ENCODE measurements at regions of chr19 and their contacts with region 1.

Region 1: DNA sequence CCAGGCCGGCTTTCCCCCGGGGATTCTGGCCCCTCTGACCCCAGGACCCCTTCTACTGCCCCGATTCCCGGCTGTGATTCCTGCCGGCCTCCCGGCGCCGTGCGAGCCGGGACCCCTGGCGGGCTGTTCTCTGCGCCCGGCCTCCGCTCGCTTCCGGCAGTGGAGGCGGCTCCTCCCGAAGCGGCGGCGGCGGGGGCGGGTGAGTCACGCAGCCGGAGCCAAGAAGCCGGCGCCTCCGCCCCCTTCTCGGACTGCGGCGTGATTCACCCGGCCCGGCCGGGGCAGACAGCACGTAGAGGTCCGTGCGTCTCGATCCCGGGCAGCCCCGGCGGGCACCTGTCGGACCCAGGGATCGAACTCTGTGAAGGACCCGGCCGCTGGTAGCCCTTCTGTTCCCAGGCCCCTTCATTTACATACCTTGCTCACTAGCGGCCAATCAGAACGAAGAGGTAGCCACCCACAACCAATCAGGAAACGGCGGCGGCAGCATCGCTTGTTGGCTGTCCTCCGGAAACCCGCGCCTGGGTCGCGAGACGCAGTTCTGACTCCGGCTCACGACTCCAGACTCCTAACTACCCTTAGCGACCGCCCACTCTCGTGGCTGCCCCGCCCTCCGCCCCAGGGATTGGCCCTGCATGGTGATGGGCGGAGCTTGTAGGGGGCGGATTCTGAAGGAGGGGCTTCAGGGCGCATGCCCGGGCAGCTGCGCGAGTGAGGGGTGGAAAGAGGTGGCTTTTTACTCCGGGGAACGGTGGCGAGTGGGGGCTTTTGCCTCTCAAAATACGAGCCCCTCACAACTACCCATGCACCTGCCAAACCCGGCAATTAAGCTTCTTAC is at the start of gene SERTAD1:
- DNase-seq: peak; percentile 100
- ATAC-seq: peak; percentile 90
- H3K4me3 Mint-ChIP-seq: peak within 1 kb of the TSS; percentile 93
- H3K27ac Mint-ChIP-seq: peak within 1 kb of the TSS; percentile 93
- H3K4me1 Mint-ChIP-seq: peaks cover 31% of the 10 kb centered on the region
- H3K27me3 Mint-ChIP-seq: no peaks in the 10 kb centered on the region
- CTCF ChIP-seq: no peak
- total RNA-seq, gene SERTAD1: 13.4 and 13.9 TPM in 2 replicates

Region 2: DNA sequence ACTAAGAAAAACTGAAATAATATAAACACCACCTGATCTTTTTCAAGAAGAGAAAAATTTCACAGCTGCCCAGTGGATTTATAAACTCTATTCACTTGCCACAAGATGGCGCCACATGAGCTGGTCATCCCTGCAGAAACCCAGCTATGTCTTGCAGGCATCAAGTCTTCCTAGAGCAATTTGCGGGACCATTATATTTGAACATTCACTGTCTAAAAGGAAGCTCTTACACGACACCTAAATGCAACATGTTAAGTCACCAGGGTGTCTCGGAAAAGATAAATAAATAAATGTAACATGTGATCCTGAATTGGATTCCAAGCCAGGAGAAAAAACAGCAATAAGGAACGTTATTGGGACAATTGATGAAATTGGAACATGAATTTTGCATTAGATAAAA is 120.3 kb before region 1 on chr19:
- CTCF ChIA-PET with region 1: interaction called, 21 read pairs
- POLR2A ChIA-PET with region 1: interaction called, 5 read pairs
- intact Hi-C with region 1: loop called (anchors 1 kb)
- DNase-seq: peak; percentile 44
- ATAC-seq: peak; percentile 69
- H3K4me3 Mint-ChIP-seq: no peak overlapping the region
- H3K27ac Mint-ChIP-seq: no peak overlapping the region
- H3K4me1 Mint-ChIP-seq: peaks cover 2% of the 10 kb centered on the region
- H3K27me3 Mint-ChIP-seq: no peaks in the 10 kb centered on the region
- CTCF ChIP-seq: no peak

Region 3: GRCh38 chr19:40403262-40403984 is 22.2 kb before region 1 on chr19:
- CTCF ChIA-PET with region 1: no interaction called
- POLR2A ChIA-PET with region 1: interaction called, 17 read pairs
- intact Hi-C with region 1: loop called (anchors 1 kb)
- DNase-seq: peak; percentile 86
- ATAC-seq: peak; percentile 81
- H3K4me3 Mint-ChIP-seq: peak overlapping the region; percentile 90
- H3K27ac Mint-ChIP-seq: peak overlapping the region; percentile 71
- H3K4me1 Mint-ChIP-seq: peaks cover 23% of the 10 kb centered on the region
- H3K27me3 Mint-ChIP-seq: peaks cover 3% of the 10 kb centered on the region
- CTCF ChIP-seq: no peak

Region 4: GRCh38 chr19:40411125-40411842 is 14.4 kb before region 1 on chr19:
- CTCF ChIA-PET with region 1: interaction called, 3 read pairs
- POLR2A ChIA-PET with region 1: interaction called, 14 read pairs
- intact Hi-C with region 1: no loop called
- DNase-seq: no peak
- ATAC-seq: peak; percentile 35
- H3K4me3 Mint-ChIP-seq: no peak overlapping the region
- H3K27ac Mint-ChIP-seq: no peak overlapping the region
- H3K4me1 Mint-ChIP-seq: peaks cover 27% of the 10 kb centered on the region
- H3K27me3 Mint-ChIP-seq: no peaks in the 10 kb centered on the region
- CTCF ChIP-seq: no peak

Region 5: GRCh38 chr19:40465557-40466150 is 40.0 kb after region 1 on chr19 and contains the start of gene BLVRB:
- CTCF ChIA-PET with region 1: interaction called, 17 read pairs
- POLR2A ChIA-PET with region 1: interaction called, 29 read pairs
- intact Hi-C with region 1: loop called (anchors 1 kb)
- DNase-seq: peak; percentile 99
- ATAC-seq: peak; percentile 89
- H3K4me3 Mint-ChIP-seq: peak within 1 kb of the TSS; percentile 81
- H3K27ac Mint-ChIP-seq: peak within 1 kb of the TSS; percentile 68
- H3K4me1 Mint-ChIP-seq: peaks cover 36% of the 10 kb centered on the region
- H3K27me3 Mint-ChIP-seq: peaks cover 14% of the 10 kb centered on the region
- CTCF ChIP-seq: no peak
- total RNA-seq, gene BLVRB: 12.3 and 14.6 TPM in 2 replicates

Region 6: DNA sequence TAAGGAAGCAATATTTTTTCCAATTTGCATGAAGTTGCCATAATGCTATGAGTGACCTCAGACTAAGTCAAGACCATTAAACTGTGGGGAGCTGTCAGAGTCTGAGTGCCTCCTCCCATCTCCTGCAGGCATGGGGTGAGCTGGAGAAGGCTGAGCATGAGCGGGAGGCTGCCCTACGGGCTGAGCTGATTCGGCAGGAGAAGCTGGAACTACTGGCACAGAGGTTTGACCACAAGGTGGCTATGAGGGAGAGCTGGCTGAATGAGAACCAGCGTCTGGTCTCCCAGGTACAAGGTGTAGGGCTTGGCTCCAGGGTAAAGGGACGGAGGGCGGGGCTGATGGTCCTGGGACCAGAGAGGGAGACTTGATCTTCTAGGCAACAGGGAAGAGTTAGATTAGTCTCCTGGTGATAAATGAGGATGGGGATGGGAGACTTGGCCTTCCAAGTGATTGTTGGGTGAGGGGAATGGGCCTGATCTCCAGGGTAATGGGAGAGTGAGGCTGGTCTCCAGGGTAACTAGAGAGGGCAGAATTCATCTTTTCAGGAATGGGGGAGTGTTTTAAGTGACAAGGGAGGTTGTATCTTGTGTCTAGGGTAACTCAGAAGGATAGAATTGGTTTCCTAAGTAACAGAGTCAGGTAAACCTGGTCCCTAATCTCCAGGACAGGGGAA is 77.1 kb after region 1 on chr19:
- CTCF ChIA-PET with region 1: no interaction called
- POLR2A ChIA-PET with region 1: no interaction called
- intact Hi-C with region 1: no loop called
- DNase-seq: no peak
- ATAC-seq: no peak
- H3K4me3 Mint-ChIP-seq: no peak overlapping the region
- H3K27ac Mint-ChIP-seq: no peak overlapping the region
- H3K4me1 Mint-ChIP-seq: no peaks in the 10 kb centered on the region
- H3K27me3 Mint-ChIP-seq: peaks cover 31% of the 10 kb centered on the region
- CTCF ChIP-seq: no peak

Region 7: DNA sequence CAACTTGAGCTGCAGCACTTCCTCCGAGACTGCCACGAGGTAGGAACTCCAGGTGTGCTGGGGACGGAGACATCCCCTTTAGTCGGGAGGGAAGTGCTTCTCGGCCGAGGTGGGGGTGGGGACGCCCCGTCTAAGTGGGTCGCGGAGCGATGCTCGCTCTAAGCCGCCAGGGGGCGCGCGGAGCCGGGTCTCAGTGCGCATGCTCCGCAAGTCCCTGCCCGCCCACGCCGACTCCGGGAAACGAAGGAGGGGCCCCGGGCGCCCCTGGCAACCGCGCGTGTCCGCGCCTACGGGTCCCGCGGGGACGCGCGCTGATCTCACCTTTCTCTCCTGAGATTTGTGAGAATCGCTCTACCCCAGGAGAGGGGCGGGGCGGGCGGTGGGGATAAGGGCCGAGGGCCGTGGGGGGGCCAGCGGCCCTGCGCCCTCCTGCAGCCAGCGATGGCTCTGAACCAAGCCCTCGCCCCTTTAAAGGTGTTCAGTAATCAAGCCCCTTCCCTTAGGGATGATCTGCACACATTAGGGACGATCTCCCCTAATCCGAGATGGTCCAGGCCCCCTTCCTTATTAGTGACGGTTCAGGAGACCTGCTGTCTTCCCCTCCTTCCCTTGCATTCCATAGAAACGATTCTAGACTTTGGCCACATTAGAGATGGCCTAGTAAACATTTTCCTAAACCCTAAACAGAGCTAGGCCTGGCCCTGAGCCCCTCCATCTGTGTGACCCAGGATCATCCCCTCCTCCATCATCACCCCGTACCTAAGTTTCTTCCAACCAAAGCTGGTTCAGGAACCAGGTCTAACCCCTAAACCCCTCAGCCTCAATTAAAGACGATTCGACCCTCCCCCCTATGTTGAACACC is 103.7 kb after region 1 on chr19:
- CTCF ChIA-PET with region 1: no interaction called
- POLR2A ChIA-PET with region 1: interaction called, 3 read pairs
- intact Hi-C with region 1: loop called (anchors 2 kb)
- DNase-seq: peak; percentile 91
- ATAC-seq: peak; percentile 91
- H3K4me3 Mint-ChIP-seq: peak overlapping the region; percentile 42
- H3K27ac Mint-ChIP-seq: no peak overlapping the region
- H3K4me1 Mint-ChIP-seq: peaks cover 18% of the 10 kb centered on the region
- H3K27me3 Mint-ChIP-seq: peaks cover 33% of the 10 kb centered on the region
- CTCF ChIP-seq: no peak

Measured in activated B cell treated with CpG ODN at 0.5 μM for 24 hours (primary cell).